K562 (cell line): ENCODE measurements at regions of chr1 and their contacts with region 1.

Region 1: DNA sequence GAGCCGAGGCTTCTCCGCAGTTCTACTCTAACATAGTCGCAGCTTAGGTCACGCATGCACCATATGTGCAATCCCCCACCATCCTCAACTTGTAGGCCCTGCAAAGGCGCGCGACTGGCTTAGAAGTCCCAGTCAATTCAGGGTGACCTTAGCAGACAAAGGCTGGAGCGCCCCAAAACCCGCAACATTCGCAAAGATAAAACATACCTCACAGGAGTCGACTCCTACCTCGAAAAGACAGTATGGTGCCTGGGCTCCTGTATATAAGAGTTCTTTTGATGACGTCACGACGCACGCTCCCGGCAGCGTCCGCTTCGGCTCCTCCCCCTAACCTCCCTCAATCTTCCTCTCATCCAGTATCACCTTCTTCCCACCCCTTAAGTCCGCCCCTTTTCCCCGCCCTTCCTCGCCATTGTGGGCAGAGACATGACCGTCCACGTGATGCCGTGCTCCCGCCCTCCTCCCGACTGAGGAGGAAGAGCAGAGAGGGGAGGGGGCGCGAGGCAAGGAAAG is at the start of gene GAS5:
- DNase-seq: peak; percentile 91 to 100 (median 94)
- ATAC-seq: peak; percentile 85
- H3K4me3 ChIP-seq: peak within 1 kb of the TSS; percentile 86
- H3K27ac ChIP-seq: peak within 1 kb of the TSS; percentile 95
- H3K4me1 ChIP-seq: peaks cover 17 to 34% of the 10 kb centered on the region in 2 experiments
- H3K27me3 ChIP-seq: no peaks in the 10 kb centered on the region; a peak in 1 of 5 replicates
- CTCF ChIP-seq: no peak
- EP300 ChIP-seq: peak; percentile 16; the same call in 1 of the 2 replicates
- POLR2A ChIP-seq: peak; percentile 100
- RAD21 ChIP-seq: peak in 1 of 2 experiments; percentile 13; a peak in 1 of 4 replicates
- polyA plus RNA-seq, gene GAS5: 891 to 1,006 TPM

Region 2: GRCh38 chr1:173476664-173477285 is 391.0 kb before region 1 on chr1:
- CTCF ChIA-PET with region 1: no interaction called
- POLR2A ChIA-PET with region 1: interaction called, 5 read pairs
- in situ Hi-C with region 1: no loop called
- intact Hi-C with region 1: loop called (anchors 5 kb)
- DNase-seq: peak; percentile 96 to 97 (median 96)
- ATAC-seq: peak; percentile 90
- H3K4me3 ChIP-seq: peak overlapping the region; percentile 89
- H3K27ac ChIP-seq: peak overlapping the region; percentile 82
- H3K4me1 ChIP-seq: peaks cover 11 to 34% of the 10 kb centered on the region in 2 experiments
- H3K27me3 ChIP-seq: no peaks in the 10 kb centered on the region
- CTCF ChIP-seq: peak in 1 of 3 experiments; percentile 17; a peak in 1 of 6 replicates
- EP300 ChIP-seq: no peak; the same call in 1 of the 2 replicates
- POLR2A ChIP-seq: 0 out of 2 replicates have a peak, but pooled peaks have one; percentile 54
- RAD21 ChIP-seq: peak in 1 of 2 experiments; percentile 32; a peak in 2 of 4 replicates

Region 3: DNA sequence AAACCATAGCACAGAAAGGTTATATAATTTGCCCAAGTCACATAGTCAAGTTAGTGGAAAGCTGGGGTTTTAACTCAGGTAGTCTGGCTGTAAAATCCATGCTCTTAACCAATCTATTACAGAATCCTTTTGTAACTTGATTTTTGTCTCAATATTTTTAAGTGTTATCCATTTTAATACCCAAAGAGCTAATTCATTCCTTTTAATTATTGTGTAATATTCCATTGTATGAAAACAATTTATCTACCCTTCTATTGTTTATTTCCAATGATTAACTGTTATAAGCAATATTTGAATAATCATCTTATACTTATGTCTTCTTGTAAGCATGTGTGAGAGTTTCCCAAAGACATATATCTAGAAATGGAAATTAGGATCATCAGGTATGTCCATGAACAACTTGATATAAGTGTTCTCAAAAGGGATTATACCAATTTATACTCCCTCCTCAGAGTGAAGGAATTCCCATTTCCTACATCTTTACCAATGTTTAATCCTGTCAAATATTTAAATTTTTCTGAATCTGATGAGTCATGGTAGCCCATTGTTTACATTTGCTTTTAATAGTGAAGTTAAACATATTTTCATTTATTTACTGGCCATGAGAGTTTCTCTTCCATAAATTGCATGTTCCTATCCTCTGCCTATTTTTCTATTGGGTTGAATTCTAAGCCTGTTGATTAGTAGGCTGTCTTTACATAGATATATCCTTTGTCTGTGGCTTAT is 218.8 kb before region 1 on chr1:
- CTCF ChIA-PET with region 1: no interaction called
- POLR2A ChIA-PET with region 1: no interaction called
- in situ Hi-C with region 1: no loop called
- intact Hi-C with region 1: no loop called
- DNase-seq: no peak
- ATAC-seq: no peak
- H3K4me3 ChIP-seq: no peak overlapping the region
- H3K27ac ChIP-seq: no peak overlapping the region
- H3K4me1 ChIP-seq: no peaks in the 10 kb centered on the region
- H3K27me3 ChIP-seq: no peaks in the 10 kb centered on the region
- CTCF ChIP-seq: no peak
- EP300 ChIP-seq: no peak
- POLR2A ChIP-seq: no peak
- RAD21 ChIP-seq: no peak

Region 4: GRCh38 chr1:173886746-173887611 is 19.2 kb after region 1 on chr1:
- CTCF ChIA-PET with region 1: no interaction called
- POLR2A ChIA-PET with region 1: interaction called, 26 read pairs
- in situ Hi-C with region 1: no loop called
- intact Hi-C with region 1: no loop called
- DNase-seq: no peak
- ATAC-seq: no peak
- H3K4me3 ChIP-seq: no peak overlapping the region
- H3K27ac ChIP-seq: no peak overlapping the region
- H3K4me1 ChIP-seq: no peaks in the 10 kb centered on the region
- H3K27me3 ChIP-seq: no peaks in the 10 kb centered on the region
- CTCF ChIP-seq: no peak
- EP300 ChIP-seq: no peak
- POLR2A ChIP-seq: no peak
- RAD21 ChIP-seq: no peak

Region 5: DNA sequence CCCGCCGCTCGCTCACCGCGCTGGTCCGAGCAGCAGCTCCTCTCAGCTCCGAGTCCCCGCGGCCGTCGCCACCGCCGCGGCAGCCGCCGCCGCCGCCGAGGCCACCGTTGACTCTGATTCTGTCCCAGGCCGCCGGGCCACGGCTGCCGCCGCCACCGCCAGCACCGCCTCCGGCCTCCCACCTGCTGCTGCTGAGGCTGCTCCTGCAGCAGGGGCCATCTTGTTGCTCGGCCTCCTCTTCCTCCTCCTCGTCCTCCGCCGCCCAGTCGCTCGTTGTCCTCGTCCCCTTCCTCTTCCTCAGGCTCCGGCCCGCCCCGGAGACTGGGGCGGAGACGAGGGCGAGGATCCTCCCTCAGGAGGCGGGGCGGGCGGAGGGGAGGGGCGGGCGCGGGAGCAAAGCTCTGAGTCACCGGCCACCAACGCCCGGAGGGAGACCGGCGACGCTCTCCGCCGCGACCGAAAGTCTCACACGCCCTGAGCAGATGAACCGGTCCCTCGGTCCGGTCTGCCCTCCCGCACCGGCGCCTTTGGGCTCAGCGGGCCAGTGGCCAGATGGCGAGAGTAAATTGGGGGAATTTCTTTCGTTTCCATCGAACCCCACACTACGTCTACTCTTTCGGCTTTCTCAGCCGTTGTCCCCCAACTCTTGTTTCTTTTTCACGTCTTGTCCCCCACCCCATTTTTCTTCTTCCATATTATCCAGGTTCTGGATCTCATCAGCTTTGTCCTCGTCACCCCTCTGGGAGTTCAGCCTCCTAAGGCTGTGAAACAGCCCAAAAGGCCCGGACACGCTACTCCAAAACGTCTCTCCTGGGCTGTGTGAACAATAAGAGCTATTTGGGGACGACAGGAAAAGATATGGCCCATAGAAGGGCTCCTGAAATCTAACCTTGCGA is 154.5 kb after region 1 on chr1 and contains the start of gene RC3H1:
- CTCF ChIA-PET with region 1: no interaction called
- POLR2A ChIA-PET with region 1: interaction called, 6 read pairs
- in situ Hi-C with region 1: no loop called
- intact Hi-C with region 1: loop called (anchors 5 kb)
- DNase-seq: peak; percentile 95 to 96 (median 96)
- ATAC-seq: peak; percentile 89
- H3K4me3 ChIP-seq: peak within 1 kb of the TSS; percentile 88
- H3K27ac ChIP-seq: peak within 1 kb of the TSS; percentile 88
- H3K4me1 ChIP-seq: peaks cover 12 to 19% of the 10 kb centered on the region in 2 experiments; a peak in 3 of 5 replicates
- H3K27me3 ChIP-seq: no peaks in the 10 kb centered on the region
- CTCF ChIP-seq: no peak
- EP300 ChIP-seq: 0 out of 2 replicates have a peak, but pooled peaks have one; percentile 24
- POLR2A ChIP-seq: peak; percentile 98
- RAD21 ChIP-seq: no peak
- polyA plus RNA-seq, gene RC3H1: 2.4 to 3.4 TPM

Region 6: GRCh38 chr1:174114788-174115448 is 247.1 kb after region 1 on chr1:
- CTCF ChIA-PET with region 1: no interaction called
- POLR2A ChIA-PET with region 1: no interaction called
- in situ Hi-C with region 1: no loop called
- intact Hi-C with region 1: no loop called
- DNase-seq: peak; percentile 54 to 83 (median 58)
- ATAC-seq: peak; percentile 99
- H3K4me3 ChIP-seq: no peak overlapping the region
- H3K27ac ChIP-seq: no peak overlapping the region
- H3K4me1 ChIP-seq: no peaks in the 10 kb centered on the region
- H3K27me3 ChIP-seq: 0 out of 5 replicates have a peak, but pooled peaks cover 0 to 4% of the 10 kb centered on the region in 2 experiments
- CTCF ChIP-seq: peak; percentile 62 to 86 (median 77)
- EP300 ChIP-seq: no peak
- POLR2A ChIP-seq: no peak
- RAD21 ChIP-seq: peak in 1 of 2 experiments; percentile 56; a peak in 2 of 4 replicates